SK-N-SH (cell line): ENCODE measurements at regions of chr11 and their contacts with region 1.

Region 1: GRCh38 chr11:518463-519250 is 11.6 kb upstream of the RNH1 start:
- DNase-seq: peak; percentile 97
- H3K4me3 ChIP-seq: peak overlapping the region; percentile 13 to 51; a peak in 2 of 4 replicates
- H3K27ac ChIP-seq: no peak overlapping the region
- H3K4me1 ChIP-seq: no peaks in the 10 kb centered on the region; a peak in 1 of 4 replicates
- H3K27me3 ChIP-seq: no peaks in the 10 kb centered on the region
- CTCF ChIP-seq: peak; percentile 80
- EP300 ChIP-seq: no peak
- RAD21 ChIP-seq: peak; percentile 55

Region 2: GRCh38 chr11:241634-242033 is 277.0 kb before region 1 on chr11:
- CTCF ChIA-PET with region 1: no interaction called
- POLR2A ChIA-PET with region 1: no interaction called
- DNase-seq: no peak
- H3K4me3 ChIP-seq: no peak overlapping the region
- H3K27ac ChIP-seq: no peak overlapping the region
- H3K4me1 ChIP-seq: peaks cover 0 to 4% of the 10 kb centered on the region in 2 experiments; a peak in 3 of 4 replicates
- H3K27me3 ChIP-seq: no peaks in the 10 kb centered on the region
- CTCF ChIP-seq: no peak
- EP300 ChIP-seq: no peak
- RAD21 ChIP-seq: no peak

Region 3: DNA sequence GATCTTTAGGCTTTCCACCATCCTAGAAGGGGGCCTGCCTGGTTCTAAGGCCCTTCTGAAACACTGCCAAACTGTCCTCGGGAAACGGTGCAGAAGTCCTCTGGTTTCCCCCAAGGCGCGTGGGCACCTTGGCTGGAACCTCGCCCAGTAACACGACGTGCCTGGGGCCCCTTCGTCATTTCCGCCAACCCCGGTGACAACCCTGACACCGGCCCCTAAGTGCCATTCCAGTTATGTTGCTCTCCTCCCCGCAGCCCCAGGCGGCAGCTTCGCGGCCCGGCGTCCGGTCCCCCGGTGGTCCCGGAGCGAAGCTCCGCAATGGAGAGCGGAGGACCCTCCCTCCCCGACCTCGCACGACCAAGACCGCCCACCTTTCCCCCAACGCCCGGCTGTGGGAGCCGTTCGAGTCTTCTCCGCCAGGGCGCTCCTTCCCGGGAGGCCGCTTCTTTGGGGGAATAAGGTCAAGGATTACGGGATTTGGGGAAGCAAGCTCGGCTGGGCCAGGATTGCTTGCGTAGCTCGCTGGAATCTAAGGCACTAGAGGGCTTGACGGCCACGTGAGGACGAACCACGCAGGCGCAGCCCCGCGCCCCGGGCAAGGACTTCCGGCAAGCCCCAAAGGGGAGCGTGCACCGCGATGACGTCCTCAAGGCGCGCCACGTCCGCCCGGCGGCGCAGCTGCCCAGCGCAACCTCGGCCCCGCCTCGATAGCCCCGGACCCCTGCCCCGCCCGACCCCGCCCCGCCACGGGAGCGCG is 12.2 kb before region 1 on chr11:
- CTCF ChIA-PET with region 1: interaction called, 16 read pairs
- POLR2A ChIA-PET with region 1: no interaction called
- DNase-seq: peak; percentile 99
- H3K4me3 ChIP-seq: peak overlapping the region; percentile 86 to 87
- H3K27ac ChIP-seq: peak overlapping the region; percentile 98 to 99
- H3K4me1 ChIP-seq: peaks cover 7 to 9% of the 10 kb centered on the region in 2 experiments; a peak in 2 of 4 replicates
- H3K27me3 ChIP-seq: no peaks in the 10 kb centered on the region
- CTCF ChIP-seq: no peak
- EP300 ChIP-seq: no peak
- RAD21 ChIP-seq: no peak

Region 4: GRCh38 chr11:535519-536454 is 17.1 kb after region 1 on chr11 and contains the start of gene HRAS:
- CTCF ChIA-PET with region 1: interaction called, 13 read pairs
- POLR2A ChIA-PET with region 1: no interaction called
- DNase-seq: peak; percentile 100
- H3K4me3 ChIP-seq: peak within 1 kb of the TSS; percentile 88 to 92
- H3K27ac ChIP-seq: peak within 1 kb of the TSS; percentile 45 to 89; a peak in 3 of 4 replicates
- H3K4me1 ChIP-seq: peaks cover 0 to 12% of the 10 kb centered on the region in 2 experiments; a peak in 1 of 4 replicates
- H3K27me3 ChIP-seq: no peaks in the 10 kb centered on the region
- CTCF ChIP-seq: no peak
- EP300 ChIP-seq: no peak
- RAD21 ChIP-seq: no peak
- polyA plus RNA-seq, gene HRAS: 138 and 217 TPM in 2 replicates